ENCODE measurements at regions of chr11 and their contacts with region 1.

Region 1: DNA sequence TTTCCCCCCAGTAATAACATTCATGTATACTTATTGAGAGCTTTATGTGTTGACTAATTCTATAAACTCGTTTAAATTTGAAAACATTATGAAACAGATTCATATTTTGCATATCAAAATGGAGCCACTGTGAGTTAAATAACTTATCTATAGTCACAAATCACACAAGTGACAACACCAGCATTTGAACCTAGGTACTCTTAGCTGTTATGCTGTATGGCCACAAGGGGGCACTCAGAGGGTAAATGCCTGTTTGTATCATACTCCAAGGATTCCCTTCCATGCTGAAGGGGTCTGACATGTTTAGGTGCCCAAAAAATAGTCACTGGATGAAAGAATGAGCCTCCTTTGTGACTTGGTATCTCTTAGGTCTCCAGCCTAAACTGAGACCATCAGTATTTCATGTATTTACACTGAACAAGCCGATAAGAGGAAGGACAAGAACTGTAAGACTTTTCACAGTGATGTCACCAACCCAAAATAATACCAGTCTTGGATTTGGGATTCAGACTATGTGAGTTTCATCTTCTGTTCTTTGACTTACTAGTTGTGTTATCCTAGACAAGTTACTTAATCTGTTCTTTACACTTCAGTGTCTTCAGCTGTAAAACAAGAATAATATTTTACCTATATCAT is 12.2 kb upstream of the OR52D1 start:
- DNase-seq: no peak
- H3K4me3 ChIP-seq: no peak overlapping the region
- H3K27ac ChIP-seq: no peak overlapping the region
- H3K4me1 ChIP-seq: no peaks in the 10 kb centered on the region
- H3K27me3 ChIP-seq: no peaks in the 10 kb centered on the region
- CTCF ChIP-seq: peak; percentile 45 to 75 (median 66)
- POLR2A ChIP-seq: no peak

Region 2: DNA sequence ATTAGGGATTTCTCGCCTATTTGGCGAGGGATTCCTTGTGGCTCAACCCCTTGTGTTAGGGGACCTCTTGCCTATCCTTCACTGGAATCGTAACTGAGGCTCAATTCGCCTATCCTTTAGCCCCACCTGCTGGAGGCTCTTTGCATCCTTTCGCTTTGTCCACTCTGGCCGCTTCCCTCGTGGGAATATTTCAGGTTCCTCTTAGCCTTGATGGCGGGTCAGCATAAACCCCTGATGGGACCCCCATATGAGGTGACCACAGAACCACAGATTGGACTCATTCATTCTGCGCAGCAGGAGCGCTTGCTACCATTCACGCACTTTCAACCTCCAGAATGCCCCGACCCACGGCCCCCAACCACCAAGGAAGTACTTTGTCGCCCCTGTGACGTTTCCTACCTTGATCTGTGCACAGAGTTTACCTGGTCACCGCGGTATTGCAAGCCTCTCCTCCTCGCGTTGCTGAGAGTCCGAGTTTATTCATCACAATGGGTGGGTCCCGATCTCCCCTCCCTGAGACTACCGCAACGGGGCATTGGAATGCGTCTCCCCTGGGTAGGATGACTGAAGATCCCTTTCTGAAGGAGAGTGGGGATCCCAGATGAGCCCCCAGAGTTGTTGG is 332.3 kb after region 1 on chr11 and contains the start of gene OR52N2:
- intact Hi-C with region 1: loop called (anchors 10 kb)
- DNase-seq: peak; percentile 7
- H3K4me3 ChIP-seq: peak within 1 kb of the TSS; percentile 22 to 60 (median 45)
- H3K27ac ChIP-seq: no peak within 1 kb of the TSS
- H3K4me1 ChIP-seq: peaks cover 0 to 13% (median 0%) of the 10 kb centered on the region in 3 donors
- H3K27me3 ChIP-seq: peaks cover 0 to 8% (median 0%) of the 10 kb centered on the region in 4 donors
- CTCF ChIP-seq: peak; percentile 65 to 79 (median 76)
- POLR2A ChIP-seq: no peak
- total RNA-seq, gene OR52N2: not detected